Naive thymus-derived CD4-positive, alpha-beta T cell (primary cell): ENCODE measurements at regions of chr4 and their contacts with region 1.

Region 1: DNA sequence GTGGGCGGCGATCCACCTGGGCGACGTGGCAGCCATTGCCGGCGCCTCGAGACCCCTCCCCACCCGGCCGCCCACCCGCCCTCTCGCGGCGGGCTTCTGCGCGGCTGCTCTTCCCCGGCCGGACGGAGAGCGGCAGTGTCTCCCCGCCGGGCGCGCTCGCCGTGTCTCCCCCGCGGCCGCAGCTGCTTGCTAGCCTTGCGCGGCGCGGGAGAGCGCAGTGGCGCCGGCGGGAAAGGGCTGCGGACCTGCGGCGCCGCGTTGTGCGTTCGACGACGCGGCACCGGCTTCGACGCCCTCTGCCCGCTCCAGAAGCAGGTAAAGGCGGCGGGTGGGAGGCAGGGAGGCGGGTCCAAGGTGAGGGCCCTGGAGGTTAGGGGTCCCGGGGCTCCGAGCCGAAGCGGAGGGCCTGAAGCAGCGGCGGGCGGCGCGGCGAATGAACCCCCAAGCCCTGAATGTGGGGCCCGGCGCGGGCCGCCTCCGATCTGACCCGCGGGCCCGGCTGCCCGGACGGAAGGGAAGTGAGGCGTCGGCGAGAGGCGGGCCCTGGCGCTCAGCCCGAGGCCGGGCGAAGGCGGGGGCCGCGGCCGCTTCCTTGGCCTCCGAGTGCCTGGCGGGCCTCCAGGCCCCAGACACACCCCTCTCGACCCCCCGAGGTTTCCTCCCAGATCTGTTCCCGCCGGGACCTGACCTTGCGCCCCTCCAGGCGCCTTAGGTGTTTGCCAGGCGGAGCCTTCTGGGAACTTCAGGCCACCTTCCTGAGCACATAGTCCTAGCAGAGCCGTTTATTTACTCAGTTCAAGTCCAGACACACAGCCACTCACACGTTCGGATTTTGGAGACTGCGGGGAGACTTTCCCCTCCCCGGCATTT is at the start of gene N4BP2:
- DNase-seq: peak; percentile 58 to 82 (median 76)
- ATAC-seq: peak; percentile 79
- H3K4me3 ChIP-seq: peak within 1 kb of the TSS; percentile 80
- H3K4me3 Mint-ChIP-seq: peak within 1 kb of the TSS; percentile 91 to 100 (median 97)
- H3K27ac ChIP-seq: peak within 1 kb of the TSS; percentile 91
- H3K27ac Mint-ChIP-seq: peak within 1 kb of the TSS; percentile 94 to 99 (median 98)
- H3K4me1 ChIP-seq: peaks cover 14 to 15% of the 10 kb centered on the region in 2 donors
- H3K4me1 Mint-ChIP-seq: peaks cover 19 to 48% (median 36%) of the 10 kb centered on the region in 7 donors
- H3K27me3 ChIP-seq: no peaks in the 10 kb centered on the region
- H3K27me3 Mint-ChIP-seq: peaks cover 0 to 6% (median 0%) of the 10 kb centered on the region in 5 donors
- total RNA-seq, gene N4BP2: 16.0 to 37.2 (median 22.2) TPM

Region 2: DNA sequence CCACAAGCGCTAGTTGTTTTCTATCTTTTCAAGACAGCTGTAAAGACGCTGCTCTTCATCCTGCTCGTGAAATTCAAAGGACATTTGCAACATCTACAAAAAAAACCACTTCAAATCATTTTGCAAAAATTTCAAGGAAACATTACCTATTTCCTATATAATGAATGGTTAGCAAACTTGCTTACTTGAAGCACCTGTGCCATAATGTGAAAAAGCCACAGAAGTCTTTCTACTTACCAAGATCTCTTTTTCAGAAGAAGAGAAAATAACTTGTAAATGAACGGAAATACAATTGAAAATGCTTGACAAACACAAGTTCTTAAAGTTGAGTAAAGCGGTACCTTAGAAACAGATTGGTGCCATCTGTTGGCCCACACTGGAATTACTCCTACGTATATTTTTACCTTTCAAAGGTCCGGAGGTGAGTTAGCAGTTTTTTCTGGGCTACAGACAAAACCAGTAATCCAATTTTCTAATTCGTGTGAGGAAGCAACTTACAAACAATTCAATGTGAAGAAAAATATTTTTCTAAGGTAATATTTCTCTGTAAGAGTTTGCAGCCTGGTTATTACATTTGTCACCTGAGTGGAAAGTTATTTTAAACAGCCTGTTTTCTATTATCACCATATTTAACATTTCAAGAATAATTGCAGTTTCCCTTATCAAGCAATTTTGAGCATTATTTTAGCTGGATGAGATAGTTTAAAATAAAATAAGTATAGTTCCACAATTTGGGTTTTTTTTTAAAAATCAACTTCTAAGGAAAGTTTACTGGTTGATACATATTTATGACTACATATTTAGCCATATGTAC is 1200.2 kb before region 1 on chr4 and contains the start of gene TLR6:
- CTCF ChIA-PET with region 1: no interaction called
- POLR2A ChIA-PET with region 1: no interaction called
- intact Hi-C with region 1: loop called in 1 of 2 experiments (anchors 1 kb)
- DNase-seq: peak in 8 of 9 donors; percentile 37 to 90 (median 83)
- ATAC-seq: peak; percentile 83
- H3K4me3 ChIP-seq: peak within 1 kb of the TSS; percentile 14
- H3K4me3 Mint-ChIP-seq: peak within 1 kb of the TSS in 9 of 10 donors; percentile 62 to 81 (median 67)
- H3K27ac ChIP-seq: peak within 1 kb of the TSS; percentile 49
- H3K27ac Mint-ChIP-seq: peak within 1 kb of the TSS; percentile 76 to 93 (median 90)
- H3K4me1 ChIP-seq: peaks cover 0 to 26% of the 10 kb centered on the region in 2 donors
- H3K4me1 Mint-ChIP-seq: peaks cover 28 to 52% (median 46%) of the 10 kb centered on the region in 7 donors
- H3K27me3 ChIP-seq: no peaks in the 10 kb centered on the region
- H3K27me3 Mint-ChIP-seq: peaks cover 0 to 6% (median 0%) of the 10 kb centered on the region in 5 donors
- total RNA-seq, gene TLR6: 1.00 to 8.8 (median 1.9) TPM

Region 3: GRCh38 chr4:39458505-39459300 is 598.2 kb before region 1 on chr4 and contains the starts of genes LIAS and RPL9:
- CTCF ChIA-PET with region 1: no interaction called
- POLR2A ChIA-PET with region 1: interaction called, 5 read pairs
- intact Hi-C with region 1: loop called (anchors 2 kb)
- DNase-seq: peak; percentile 80 to 96 (median 92)
- ATAC-seq: peak; percentile 93
- H3K4me3 ChIP-seq: peak within 1 kb of the TSS; percentile 85
- H3K4me3 Mint-ChIP-seq: peak within 1 kb of the TSS; percentile 92 to 99 (median 96)
- H3K27ac ChIP-seq: peak within 1 kb of the TSS; percentile 95
- H3K27ac Mint-ChIP-seq: peak within 1 kb of the TSS; percentile 98 to 100 (median 99)
- H3K4me1 ChIP-seq: peaks cover 17 to 19% of the 10 kb centered on the region in 2 donors
- H3K4me1 Mint-ChIP-seq: peaks cover 8 to 60% (median 47%) of the 10 kb centered on the region in 7 donors
- H3K27me3 ChIP-seq: no peaks in the 10 kb centered on the region
- H3K27me3 Mint-ChIP-seq: peaks cover 0 to 2% (median 0%) of the 10 kb centered on the region in 5 donors
- total RNA-seq, gene LIAS: 14.5 to 27.8 (median 16.4) TPM
- total RNA-seq, gene RPL9: 1,414 to 3,398 (median 2,567) TPM

Region 4: DNA sequence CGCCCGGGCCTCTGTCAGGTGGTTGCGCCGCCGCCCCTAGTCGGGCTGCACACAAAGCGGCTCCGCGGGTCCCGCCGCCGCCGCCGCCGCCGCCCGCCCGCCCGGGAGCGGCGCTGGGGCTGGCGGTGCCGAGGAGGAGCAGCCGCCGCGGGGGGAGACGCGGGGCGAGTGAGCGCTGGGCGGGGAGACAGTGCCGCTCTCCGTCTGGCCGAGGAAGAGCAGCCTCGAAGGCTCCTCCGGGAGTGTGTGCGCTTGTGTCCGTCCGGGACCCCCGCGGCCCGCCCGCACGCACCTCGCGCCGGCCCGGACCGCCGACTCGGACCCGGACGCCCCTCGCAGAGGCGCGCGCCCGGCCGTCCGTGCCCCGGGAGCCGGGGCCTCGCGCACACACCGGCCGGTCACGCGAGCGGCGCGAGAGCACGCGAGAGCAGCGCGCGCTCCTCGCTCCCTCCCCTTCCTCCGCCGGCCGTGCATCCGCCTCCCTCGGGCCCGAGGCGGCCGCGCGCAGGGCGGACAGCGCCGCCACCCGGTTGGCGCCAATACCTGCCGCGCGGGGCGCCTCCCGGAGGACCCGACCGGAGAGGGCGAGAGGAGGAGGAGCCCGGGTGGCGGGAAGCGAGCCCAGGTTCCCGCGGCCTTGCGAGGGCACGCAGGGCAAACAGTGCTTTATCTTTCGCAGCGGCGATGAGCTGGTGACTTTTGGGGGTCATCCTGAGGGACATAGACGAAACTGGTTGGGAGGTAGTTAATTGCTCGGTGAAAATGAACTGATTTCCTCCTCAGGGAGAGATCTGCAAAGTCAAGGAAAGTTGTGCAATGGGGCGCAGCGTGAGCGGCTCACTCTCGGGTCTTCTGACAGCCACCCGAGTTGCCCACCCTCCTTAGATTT is 79.2 kb before region 1 on chr4 and contains the start of gene PDS5A:
- CTCF ChIA-PET with region 1: no interaction called
- POLR2A ChIA-PET with region 1: interaction called, 6 read pairs
- intact Hi-C with region 1: loop called (anchors 1 kb)
- DNase-seq: peak; percentile 83 to 95 (median 91)
- ATAC-seq: peak; percentile 94
- H3K4me3 ChIP-seq: peak within 1 kb of the TSS; percentile 78
- H3K4me3 Mint-ChIP-seq: peak within 1 kb of the TSS; percentile 87 to 99 (median 91)
- H3K27ac ChIP-seq: peak within 1 kb of the TSS; percentile 89
- H3K27ac Mint-ChIP-seq: peak within 1 kb of the TSS; percentile 91 to 98 (median 96)
- H3K4me1 ChIP-seq: peaks cover 3 to 18% of the 10 kb centered on the region in 2 donors
- H3K4me1 Mint-ChIP-seq: peaks cover 28 to 43% (median 31%) of the 10 kb centered on the region in 7 donors
- H3K27me3 ChIP-seq: no peaks in the 10 kb centered on the region
- H3K27me3 Mint-ChIP-seq: no peaks in the 10 kb centered on the region
- total RNA-seq, gene PDS5A: 92.7 to 102 (median 98.5) TPM

Region 5: GRCh38 chr4:40238700-40239548 is 182.0 kb after region 1 on chr4:
- CTCF ChIA-PET with region 1: no interaction called
- POLR2A ChIA-PET with region 1: interaction called, 3 read pairs
- intact Hi-C with region 1: loop called in 1 of 2 experiments (anchors 2 kb)
- DNase-seq: peak in 8 of 9 donors; percentile 54 to 90 (median 75)
- ATAC-seq: peak; percentile 94
- H3K4me3 ChIP-seq: peak overlapping the region; percentile 49
- H3K4me3 Mint-ChIP-seq: peak overlapping the region; percentile 64 to 87 (median 79)
- H3K27ac ChIP-seq: peak overlapping the region; percentile 79
- H3K27ac Mint-ChIP-seq: peak overlapping the region; percentile 89 to 98 (median 94)
- H3K4me1 ChIP-seq: peaks cover 81 to 90% of the 10 kb centered on the region in 2 donors
- H3K4me1 Mint-ChIP-seq: peaks cover 54 to 97% (median 94%) of the 10 kb centered on the region in 7 donors
- H3K27me3 ChIP-seq: no peaks in the 10 kb centered on the region
- H3K27me3 Mint-ChIP-seq: no peaks in the 10 kb centered on the region

Region 6: DNA sequence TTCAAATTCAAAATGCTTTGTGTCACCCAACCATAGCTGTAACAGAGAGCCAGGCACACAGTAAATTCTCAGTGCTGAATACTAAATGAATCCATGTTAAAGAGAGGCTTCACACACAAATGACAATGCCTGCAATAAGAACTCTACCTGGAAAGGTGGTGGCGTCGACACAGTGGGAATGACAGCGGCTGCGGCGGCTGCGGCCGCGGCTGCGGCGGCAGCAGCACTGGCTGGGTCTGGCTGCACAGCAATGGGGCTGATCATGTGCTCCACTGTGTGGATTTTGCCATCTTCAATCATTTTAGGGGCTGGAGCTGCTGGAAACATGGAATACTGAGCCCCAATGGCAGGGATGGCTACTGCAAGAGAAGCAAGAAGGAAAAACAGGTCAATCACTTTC is 375.6 kb after region 1 on chr4:
- CTCF ChIA-PET with region 1: no interaction called
- POLR2A ChIA-PET with region 1: no interaction called
- intact Hi-C with region 1: loop called in 1 of 2 experiments (anchors 2 kb)
- DNase-seq: no peak
- ATAC-seq: no peak
- H3K4me3 ChIP-seq: no peak overlapping the region
- H3K4me3 Mint-ChIP-seq: peak overlapping the region in 6 of 10 donors; percentile 11 to 62 (median 51)
- H3K27ac ChIP-seq: peak overlapping the region; percentile 61
- H3K27ac Mint-ChIP-seq: peak overlapping the region; percentile 83 to 99 (median 89)
- H3K4me1 ChIP-seq: peaks cover 0 to 29% of the 10 kb centered on the region in 2 donors
- H3K4me1 Mint-ChIP-seq: peaks cover 11 to 60% (median 42%) of the 10 kb centered on the region in 7 donors
- H3K27me3 ChIP-seq: no peaks in the 10 kb centered on the region
- H3K27me3 Mint-ChIP-seq: no peaks in the 10 kb centered on the region